ENCODE measurements at regions of chr19 and their contacts with region 1.

Region 1: GRCh38 chr19:43446746-43447489 is 18.5 kb downstream of the LYPD3 start:
- DNase-seq: peak; percentile 53
- ATAC-seq: peak; percentile 92
- H3K4me3 ChIP-seq: no peak overlapping the region
- H3K27ac ChIP-seq: no peak overlapping the region
- H3K4me1 ChIP-seq: peaks cover 0 to 3% of the 10 kb centered on the region in 2 experiments; a peak in 1 of 4 replicates
- H3K27me3 ChIP-seq: no peaks in the 10 kb centered on the region
- CTCF ChIP-seq: peak; percentile 92 to 93 (median 92)
- POLR2A ChIP-seq: no peak
- RAD21 ChIP-seq: peak; percentile 96

Region 2: GRCh38 chr19:43463381-43464136 is 16.6 kb after region 1 on chr19:
- CTCF ChIA-PET with region 1: interaction called, 15 read pairs
- POLR2A ChIA-PET with region 1: interaction called, 3 read pairs
- RAD21 ChIA-PET with region 1: no interaction called
- intact Hi-C with region 1: no loop called
- DNase-seq: peak; percentile 90
- ATAC-seq: peak; percentile 87
- H3K4me3 ChIP-seq: peak overlapping the region; percentile 60 to 73
- H3K27ac ChIP-seq: peak overlapping the region; percentile 26
- H3K4me1 ChIP-seq: peaks cover 22 to 54% of the 10 kb centered on the region in 2 experiments
- H3K27me3 ChIP-seq: no peaks in the 10 kb centered on the region
- CTCF ChIP-seq: no peak
- POLR2A ChIP-seq: no peak
- RAD21 ChIP-seq: no peak

Region 3: DNA sequence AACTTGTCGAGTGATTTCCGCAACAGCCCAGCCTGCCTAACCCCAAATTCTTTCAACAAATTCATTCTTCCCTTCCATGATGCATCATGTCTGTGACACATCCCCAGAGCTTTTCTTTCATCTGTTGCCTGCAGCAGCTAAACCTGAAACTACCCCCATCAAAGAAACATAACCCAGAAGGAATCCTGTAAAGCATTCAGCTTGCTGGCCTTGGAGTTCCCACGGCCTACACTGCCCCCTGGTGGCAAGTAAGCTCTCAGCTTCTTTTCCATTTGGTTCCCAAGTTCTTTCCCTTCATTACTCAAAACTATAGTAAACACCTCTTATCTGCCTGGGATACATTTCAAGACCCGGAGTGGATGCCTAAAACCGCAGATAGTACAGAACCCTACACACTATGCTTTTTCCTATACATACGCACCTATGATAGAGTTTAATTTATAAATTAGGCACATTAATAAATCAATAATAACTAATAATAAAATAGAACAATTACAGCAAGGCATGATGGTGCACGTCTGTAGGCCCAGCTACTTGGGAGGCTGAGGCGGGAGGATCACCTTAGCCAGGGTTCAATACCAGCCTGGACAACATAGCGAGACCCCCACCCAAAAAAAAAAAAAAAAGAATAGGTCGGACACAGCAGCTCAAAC is 72.6 kb after region 1 on chr19:
- CTCF ChIA-PET with region 1: interaction called, 225 read pairs
- POLR2A ChIA-PET with region 1: interaction called, 9 read pairs
- RAD21 ChIA-PET with region 1: interaction called, 24 to 32 read pairs
- intact Hi-C with region 1: loop called (anchors 1 kb)
- DNase-seq: peak; percentile 74
- ATAC-seq: peak; percentile 76
- H3K4me3 ChIP-seq: no peak overlapping the region
- H3K27ac ChIP-seq: no peak overlapping the region
- H3K4me1 ChIP-seq: peaks cover 19 to 30% of the 10 kb centered on the region in 2 experiments
- H3K27me3 ChIP-seq: no peaks in the 10 kb centered on the region
- CTCF ChIP-seq: peak; percentile 88 to 93 (median 91)
- POLR2A ChIP-seq: no peak
- RAD21 ChIP-seq: peak; percentile 93

Region 4: GRCh38 chr19:43532962-43533545 is 86.1 kb after region 1 on chr19 and contains the start of gene ZNF575:
- CTCF ChIA-PET with region 1: interaction called, 12 read pairs
- POLR2A ChIA-PET with region 1: no interaction called
- RAD21 ChIA-PET with region 1: no interaction called
- intact Hi-C with region 1: no loop called
- DNase-seq: peak; percentile 87
- ATAC-seq: peak; percentile 79
- H3K4me3 ChIP-seq: peak within 1 kb of the TSS; percentile 62 to 70
- H3K27ac ChIP-seq: peak within 1 kb of the TSS; percentile 95
- H3K4me1 ChIP-seq: peaks cover 27 to 52% of the 10 kb centered on the region in 2 experiments
- H3K27me3 ChIP-seq: no peaks in the 10 kb centered on the region
- CTCF ChIP-seq: no peak
- POLR2A ChIP-seq: no peak
- RAD21 ChIP-seq: no peak
- total RNA-seq, gene ZNF575: 1.9 TPM

Region 5: GRCh38 chr19:43584484-43584883 is 137.6 kb after region 1 on chr19:
- CTCF ChIA-PET with region 1: no interaction called
- POLR2A ChIA-PET with region 1: no interaction called
- RAD21 ChIA-PET with region 1: no interaction called
- intact Hi-C with region 1: no loop called
- DNase-seq: no peak
- ATAC-seq: no peak
- H3K4me3 ChIP-seq: no peak overlapping the region
- H3K27ac ChIP-seq: no peak overlapping the region
- H3K4me1 ChIP-seq: peaks cover 0 to 4% of the 10 kb centered on the region in 2 experiments; a peak in 1 of 4 replicates
- H3K27me3 ChIP-seq: no peaks in the 10 kb centered on the region
- CTCF ChIP-seq: no peak
- POLR2A ChIP-seq: no peak
- RAD21 ChIP-seq: no peak

Measured in HCT116 (cell line).